Common myeloid progenitor, CD34-positive (primary cell): ENCODE measurements at regions of chr1 and their contacts with region 1.

Region 1: GRCh38 chr1:27581823-27582243 is 22.1 kb downstream of the AHDC1 start:
- DNase-seq: no peak
- H3K4me3 ChIP-seq: no peak overlapping the region
- H3K27ac ChIP-seq: no peak overlapping the region
- H3K4me1 ChIP-seq: peaks cover 4 to 40% (median 30%) of the 10 kb centered on the region in 4 experiments
- H3K27me3 ChIP-seq: no peaks in the 10 kb centered on the region

Region 2: DNA sequence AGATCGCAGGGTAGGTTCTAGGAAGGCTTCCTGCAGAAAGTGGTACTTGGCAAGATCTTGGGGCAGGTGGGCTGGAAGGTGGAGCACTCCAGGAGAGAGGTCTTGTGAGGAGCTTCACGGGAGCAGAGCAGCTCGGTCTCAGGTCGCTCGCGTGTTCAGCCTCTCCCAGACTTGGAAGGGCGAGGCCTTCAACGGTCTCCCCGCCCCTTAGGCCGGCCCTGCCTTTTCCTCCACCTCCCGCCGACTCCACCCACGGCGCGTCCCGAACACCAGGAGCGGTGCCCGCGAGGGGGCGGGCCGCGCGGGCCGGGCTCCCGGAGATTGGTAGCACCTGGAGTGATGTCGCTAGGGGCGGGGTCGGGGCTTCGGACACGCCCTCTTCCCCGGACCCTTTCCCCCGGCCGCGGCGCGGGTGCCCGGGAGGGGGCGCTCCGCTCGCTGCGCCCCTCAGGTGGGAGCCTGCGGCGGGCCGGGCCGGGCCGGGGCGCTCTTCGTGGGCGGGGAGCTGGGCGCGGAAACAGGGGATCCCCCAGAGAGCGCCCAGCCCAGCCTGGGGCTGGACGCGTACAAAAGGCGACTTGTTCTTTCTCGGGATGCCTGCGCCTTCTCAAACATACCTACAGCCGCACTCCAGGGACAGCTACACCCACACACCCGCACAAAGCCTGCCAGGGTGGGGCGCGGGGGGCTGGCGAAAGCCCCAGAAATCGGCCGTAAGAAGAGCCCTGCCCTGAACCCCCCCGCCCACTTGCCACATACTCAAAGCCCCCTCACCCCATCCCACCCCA is 13.3 kb before region 1 on chr1:
- CTCF ChIA-PET with region 1: interaction called, 66 read pairs
- POLR2A ChIA-PET with region 1: no interaction called
- DNase-seq: peak; percentile 93 to 95 (median 94)
- H3K4me3 ChIP-seq: peak overlapping the region in 5 of 7 experiments; percentile 27 to 70 (median 36)
- H3K27ac ChIP-seq: peak overlapping the region in 1 of 2 experiments; percentile 56
- H3K4me1 ChIP-seq: peaks cover 3 to 98% (median 76%) of the 10 kb centered on the region in 4 experiments
- H3K27me3 ChIP-seq: no peaks in the 10 kb centered on the region